ENCODE measurements at regions of chr1 and their contacts with region 1.

Region 1: GRCh38 chr1:158998781-158999161 is 10.9 kb upstream of the IFI16 start:
- DNase-seq: peak; percentile 58
- ATAC-seq: peak; percentile 38
- H3K4me3 Mint-ChIP-seq: peak overlapping the region; percentile 44
- H3K27ac Mint-ChIP-seq: peak overlapping the region; percentile 87
- H3K4me1 Mint-ChIP-seq: peaks cover 38% of the 10 kb centered on the region
- H3K27me3 Mint-ChIP-seq: no peaks in the 10 kb centered on the region

Region 2: GRCh38 chr1:158203693-158204457 is 794.9 kb before region 1 on chr1:
- CTCF ChIA-PET with region 1: interaction called, 18 read pairs
- DNase-seq: no peak
- ATAC-seq: peak; percentile 71
- H3K4me3 Mint-ChIP-seq: no peak overlapping the region
- H3K27ac Mint-ChIP-seq: no peak overlapping the region
- H3K4me1 Mint-ChIP-seq: peaks cover 11% of the 10 kb centered on the region
- H3K27me3 Mint-ChIP-seq: peaks cover 30% of the 10 kb centered on the region

Region 3: DNA sequence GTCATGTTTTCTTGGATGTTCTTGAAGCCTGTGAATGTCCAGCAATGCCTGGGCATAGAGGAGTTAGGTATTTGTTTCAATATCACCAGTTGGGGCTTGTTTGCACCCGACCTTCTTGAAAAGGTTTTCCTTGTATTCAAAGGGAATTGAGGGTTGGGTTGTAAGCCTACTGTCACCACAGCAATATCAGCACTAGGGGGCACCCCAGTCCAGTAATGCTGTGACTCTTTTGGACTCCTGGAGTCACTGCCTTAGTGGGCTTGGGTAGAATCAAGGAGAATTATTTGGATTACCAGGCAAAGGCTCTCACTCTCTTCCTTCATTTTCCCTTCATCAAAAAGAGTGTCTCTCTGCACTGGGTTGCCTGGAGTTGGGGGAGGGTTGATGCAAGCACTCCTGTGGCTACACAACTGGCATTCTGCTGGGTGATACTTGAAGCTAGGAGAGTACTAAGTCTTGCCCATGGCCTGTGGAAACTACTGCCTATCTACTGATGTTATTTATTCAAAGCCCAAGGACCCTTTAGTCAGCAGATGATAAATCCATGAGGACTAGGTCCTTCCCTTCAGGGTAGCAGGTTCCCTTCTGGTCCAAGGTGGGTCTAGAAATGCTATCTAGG is 492.3 kb before region 1 on chr1:
- CTCF ChIA-PET with region 1: interaction called, 14 read pairs
- DNase-seq: peak; percentile 59
- ATAC-seq: peak; percentile 71
- H3K4me3 Mint-ChIP-seq: no peak overlapping the region
- H3K27ac Mint-ChIP-seq: no peak overlapping the region
- H3K4me1 Mint-ChIP-seq: no peaks in the 10 kb centered on the region
- H3K27me3 Mint-ChIP-seq: peaks cover 38% of the 10 kb centered on the region

Region 4: GRCh38 chr1:159009704-159010361 is 11.1 kb after region 1 on chr1 and contains the start of gene IFI16:
- CTCF ChIA-PET with region 1: interaction called, 10 read pairs
- DNase-seq: peak; percentile 83
- ATAC-seq: peak; percentile 68
- H3K4me3 Mint-ChIP-seq: peak within 1 kb of the TSS; percentile 90
- H3K27ac Mint-ChIP-seq: peak within 1 kb of the TSS; percentile 98
- H3K4me1 Mint-ChIP-seq: peaks cover 46% of the 10 kb centered on the region
- H3K27me3 Mint-ChIP-seq: no peaks in the 10 kb centered on the region
- total RNA-seq, gene IFI16: 388 to 393 TPM

Region 5: GRCh38 chr1:159077120-159077961 is 78.6 kb after region 1 on chr1:
- CTCF ChIA-PET with region 1: interaction called, 10 read pairs
- DNase-seq: peak; percentile 100
- ATAC-seq: peak; percentile 86
- H3K4me3 Mint-ChIP-seq: peak overlapping the region; percentile 76
- H3K27ac Mint-ChIP-seq: peak overlapping the region; percentile 97
- H3K4me1 Mint-ChIP-seq: peaks cover 44% of the 10 kb centered on the region
- H3K27me3 Mint-ChIP-seq: peaks cover 3% of the 10 kb centered on the region

Measured in activated CD8-positive, alpha-beta memory T cell treated with anti-CD3 and anti-CD28 coated beads, Interleukin-2, amount 10 ng/mL, durations not matched to agents 7 days and 5 days (primary cell).